ENCODE measurements at regions of chr19 and their contacts with region 1.

Region 1: DNA sequence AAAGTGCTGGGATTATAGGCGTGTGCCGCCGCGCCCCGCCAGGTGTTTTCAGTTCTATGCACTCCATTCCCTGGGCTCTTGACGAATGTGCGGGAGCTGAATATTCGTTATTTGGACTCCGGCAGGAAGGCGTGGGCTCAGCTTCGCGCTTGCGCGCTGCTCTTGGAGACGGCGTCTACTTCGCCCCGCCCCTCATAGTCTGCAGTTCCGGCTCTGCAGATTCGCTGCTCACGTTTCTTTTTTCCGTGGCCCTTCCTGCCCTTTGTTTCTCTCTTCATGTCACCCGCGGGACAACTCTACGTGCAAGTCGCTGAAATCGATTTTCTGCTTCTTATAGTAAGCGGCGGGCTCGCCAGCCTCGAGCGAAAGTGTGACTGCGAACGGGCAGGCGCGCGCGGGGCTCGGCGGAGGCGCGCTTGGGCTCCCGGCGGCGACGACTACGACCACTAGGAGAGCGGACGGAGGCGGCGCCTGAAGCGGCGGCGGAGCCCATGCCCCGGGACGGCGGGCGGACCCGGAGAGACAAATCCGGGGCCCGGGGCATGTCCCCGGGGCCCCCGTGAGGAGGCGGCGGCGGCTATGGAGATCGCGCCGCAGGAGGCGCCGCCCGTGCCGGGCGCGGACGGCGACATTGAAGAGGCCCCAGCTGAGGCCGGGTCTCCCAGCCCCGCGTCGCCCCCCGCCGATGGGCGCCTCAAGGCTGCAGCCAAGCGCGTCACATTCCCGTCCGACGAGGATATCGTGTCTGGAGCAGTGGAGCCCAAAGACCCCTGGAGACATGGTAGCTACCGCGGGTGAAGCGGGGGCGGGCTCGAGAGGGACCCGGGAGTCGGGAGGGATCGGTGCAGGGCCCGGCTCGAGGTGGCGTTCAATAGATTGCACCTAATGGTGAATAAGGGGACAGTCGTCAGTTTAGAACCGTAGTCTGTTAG is at the start of gene PPP1R37:
- DNase-seq: peak; percentile 99
- H3K4me3 Mint-ChIP-seq: peak within 1 kb of the TSS; percentile 87
- H3K27ac Mint-ChIP-seq: peak within 1 kb of the TSS; percentile 98
- H3K4me1 Mint-ChIP-seq: peaks cover 45% of the 10 kb centered on the region
- H3K27me3 Mint-ChIP-seq: no peaks in the 10 kb centered on the region
- CTCF ChIP-seq: no peak
- total RNA-seq, gene PPP1R37: 22.0 and 22.5 TPM in 2 replicates

Region 2: GRCh38 chr19:45038931-45039893 is 53.8 kb before region 1 on chr19 and contains the start of gene CLASRP:
- CTCF ChIA-PET with region 1: no interaction called
- POLR2A ChIA-PET with region 1: interaction called, 16 read pairs
- intact Hi-C with region 1: no loop called
- DNase-seq: peak; percentile 91
- H3K4me3 Mint-ChIP-seq: peak within 1 kb of the TSS; percentile 95
- H3K27ac Mint-ChIP-seq: peak within 1 kb of the TSS; percentile 99
- H3K4me1 Mint-ChIP-seq: peaks cover 22% of the 10 kb centered on the region
- H3K27me3 Mint-ChIP-seq: no peaks in the 10 kb centered on the region
- CTCF ChIP-seq: no peak
- total RNA-seq, gene CLASRP: 71.7 and 83.5 TPM in 2 replicates

Region 3: GRCh38 chr19:45079063-45079910 is 13.7 kb before region 1 on chr19 and contains the start of gene GEMIN7:
- CTCF ChIA-PET with region 1: interaction called, 3 read pairs
- POLR2A ChIA-PET with region 1: interaction called, 102 read pairs
- intact Hi-C with region 1: no loop called
- DNase-seq: peak; percentile 74
- H3K4me3 Mint-ChIP-seq: peak within 1 kb of the TSS; percentile 99
- H3K27ac Mint-ChIP-seq: peak within 1 kb of the TSS; percentile 94
- H3K4me1 Mint-ChIP-seq: peaks cover 22% of the 10 kb centered on the region
- H3K27me3 Mint-ChIP-seq: no peaks in the 10 kb centered on the region
- CTCF ChIP-seq: no peak
- total RNA-seq, gene GEMIN7: 21.0 and 21.8 TPM in 2 replicates

Region 4: GRCh38 chr19:45125926-45126493 is 33.0 kb after region 1 on chr19:
- CTCF ChIA-PET with region 1: interaction called, 8 read pairs
- POLR2A ChIA-PET with region 1: interaction called, 10 read pairs
- intact Hi-C with region 1: loop called (anchors 2 kb)
- DNase-seq: peak; percentile 73
- H3K4me3 Mint-ChIP-seq: no peak overlapping the region
- H3K27ac Mint-ChIP-seq: no peak overlapping the region
- H3K4me1 Mint-ChIP-seq: peaks cover 6% of the 10 kb centered on the region
- H3K27me3 Mint-ChIP-seq: no peaks in the 10 kb centered on the region
- CTCF ChIP-seq: peak; percentile 65

Region 5: DNA sequence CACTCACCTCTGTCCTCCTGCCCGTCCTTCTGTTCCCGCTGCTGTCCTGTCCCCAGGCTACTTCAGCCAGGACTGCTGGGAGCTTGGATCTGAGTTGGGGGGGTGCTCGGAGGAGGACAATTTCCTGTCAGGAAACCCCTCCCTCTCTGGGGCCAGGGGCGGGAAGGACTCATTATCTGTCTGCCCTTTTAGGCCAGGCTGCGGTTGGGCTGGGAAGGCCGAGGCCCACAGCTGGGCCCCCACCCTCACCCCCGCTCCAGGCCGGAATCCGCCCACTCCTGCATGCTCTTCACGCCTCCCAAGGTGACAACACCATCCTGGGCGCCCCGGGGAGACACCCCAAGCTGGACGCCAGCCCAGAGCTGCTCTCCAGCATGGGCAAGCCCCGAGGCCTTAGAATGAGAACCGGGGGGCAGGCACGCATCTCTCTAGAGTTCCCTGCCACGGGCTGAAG is 152.3 kb after region 1 on chr19 and contains the start of gene EXOC3L2:
- CTCF ChIA-PET with region 1: interaction called, 5 read pairs
- POLR2A ChIA-PET with region 1: interaction called, 3 read pairs
- intact Hi-C with region 1: loop called (anchors 10 kb)
- DNase-seq: no peak
- H3K4me3 Mint-ChIP-seq: no peak within 1 kb of the TSS
- H3K27ac Mint-ChIP-seq: peak within 1 kb of the TSS; percentile 16
- H3K4me1 Mint-ChIP-seq: no peaks in the 10 kb centered on the region
- H3K27me3 Mint-ChIP-seq: peaks cover 10% of the 10 kb centered on the region
- CTCF ChIP-seq: no peak
- total RNA-seq, gene EXOC3L2: not detected in 2 replicates

Region 6: GRCh38 chr19:45331423-45331822 is 238.4 kb after region 1 on chr19:
- CTCF ChIA-PET with region 1: no interaction called
- POLR2A ChIA-PET with region 1: interaction called, 3 read pairs
- intact Hi-C with region 1: loop called (anchors 10 kb)
- DNase-seq: no peak
- H3K4me3 Mint-ChIP-seq: no peak overlapping the region
- H3K27ac Mint-ChIP-seq: no peak overlapping the region
- H3K4me1 Mint-ChIP-seq: peaks cover 2% of the 10 kb centered on the region
- H3K27me3 Mint-ChIP-seq: no peaks in the 10 kb centered on the region
- CTCF ChIP-seq: no peak